Left cardiac atrium (tissue), 4 donors: ENCODE measurements at regions of chr4 and their contacts with region 1.

Region 1: DNA sequence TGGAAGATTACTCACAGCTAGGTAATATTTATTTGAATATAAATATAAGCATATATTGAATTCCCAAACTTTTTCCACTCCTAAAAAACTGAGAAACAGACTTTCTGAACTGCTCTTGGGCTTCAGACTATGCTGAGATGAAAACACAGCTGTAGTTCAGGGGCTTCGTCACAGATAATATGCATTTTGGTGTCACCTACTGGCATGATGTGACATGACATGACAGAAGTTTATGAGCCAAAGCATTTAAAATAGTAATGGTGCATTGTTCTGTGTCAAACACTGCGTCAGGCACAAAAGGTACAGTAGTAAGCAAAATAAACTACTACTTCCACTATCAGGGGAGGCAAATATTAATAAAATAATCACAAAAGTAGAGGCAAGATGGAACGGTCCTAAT is 171.3 kb downstream of the BTC start:
- DNase-seq: no peak
- ATAC-seq: peak in 1 of 2 donors; percentile 57

Region 2: DNA sequence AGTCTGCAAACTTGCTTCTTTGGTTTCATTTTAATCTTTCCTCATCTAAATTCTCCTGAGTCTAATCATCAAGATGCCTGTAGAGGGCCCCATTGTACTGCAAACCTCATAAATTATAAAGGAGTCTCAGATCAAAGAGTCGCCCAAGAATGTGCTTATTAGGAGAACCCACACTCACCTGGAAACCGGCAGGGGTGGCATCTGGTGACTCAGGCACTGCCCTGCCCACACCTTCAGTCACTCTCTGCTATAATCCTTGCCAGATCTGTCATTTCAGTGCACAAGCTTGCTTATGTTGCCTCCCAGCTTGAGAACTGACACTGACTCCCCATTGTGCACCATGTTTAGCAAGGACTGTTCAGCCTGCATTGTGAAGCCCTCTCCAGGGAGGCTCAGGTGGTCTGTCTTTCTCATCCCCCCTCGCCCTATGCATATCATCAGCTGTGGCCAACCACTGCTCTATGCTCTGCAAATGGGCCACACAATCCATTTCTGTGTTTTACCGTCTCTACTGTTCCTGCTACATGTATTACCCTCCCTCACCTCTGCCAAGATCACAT is 302.4 kb before region 1 on chr4:
- intact Hi-C with region 1: loop called in 1 of 2 experiments (anchors 5 kb)
- DNase-seq: no peak
- ATAC-seq: peak; percentile 41 to 45

Region 3: GRCh38 chr4:74376888-74377483 is 246.1 kb before region 1 on chr4:
- intact Hi-C with region 1: loop called in 1 of 2 experiments (anchors 5 kb)
- DNase-seq: no peak
- ATAC-seq: peak; percentile 72 to 81

Region 4: GRCh38 chr4:74543231-74543670 is 79.8 kb before region 1 on chr4:
- intact Hi-C with region 1: loop called in 1 of 2 experiments (anchors 5 kb)
- DNase-seq: no peak
- ATAC-seq: no peak